Transverse colon (tissue), 4 donors: ENCODE measurements at regions of chr6 and their contacts with region 1.

Region 1: DNA sequence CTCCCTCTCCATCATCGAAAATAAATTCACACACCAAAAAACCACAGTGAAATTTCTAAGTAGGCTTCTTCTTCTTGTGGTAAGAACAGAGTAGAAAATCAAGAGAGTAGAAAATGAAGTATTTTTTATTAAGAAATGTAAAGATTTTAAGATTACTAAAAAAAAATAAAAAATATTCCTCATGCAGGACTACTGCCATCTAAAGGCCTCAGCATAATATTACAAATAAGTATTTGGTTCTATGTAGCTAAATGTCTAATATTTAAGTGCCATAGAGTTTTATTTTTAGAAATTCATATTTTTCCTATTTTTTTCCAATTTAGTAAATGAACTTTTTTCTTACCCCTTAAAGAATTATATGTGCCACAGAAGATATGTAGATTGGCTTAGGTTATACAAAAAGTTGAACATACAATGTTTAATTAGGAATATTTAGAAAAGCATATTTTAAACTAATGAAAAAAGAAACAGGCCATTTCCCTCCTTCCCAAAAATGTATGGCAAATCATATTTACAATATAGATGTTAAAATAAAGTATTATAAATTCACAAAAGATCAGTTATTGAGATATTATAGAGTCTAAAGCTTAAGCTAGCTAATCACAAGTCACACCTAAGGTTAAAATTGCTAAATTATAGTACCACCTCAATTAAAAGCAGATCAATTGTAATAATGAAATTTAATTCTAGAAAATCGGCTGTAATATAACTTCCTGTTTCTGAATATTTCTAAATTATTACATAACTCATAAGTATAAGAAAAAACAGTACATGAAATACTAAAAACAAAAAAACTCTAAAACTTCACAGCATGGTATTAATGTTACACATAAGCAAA is 3.5 kb upstream of the NT5DC1 start:
- DNase-seq: no peak
- H3K4me3 ChIP-seq: no peak overlapping the region
- H3K27ac ChIP-seq: no peak overlapping the region
- H3K4me1 ChIP-seq: peaks cover 4 to 20% (median 8%) of the 10 kb centered on the region in 4 donors
- H3K27me3 ChIP-seq: no peaks in the 10 kb centered on the region
- CTCF ChIP-seq: peak; percentile 40 to 57 (median 55)
- EP300 ChIP-seq: no peak
- POLR2A ChIP-seq: no peak

Region 2: DNA sequence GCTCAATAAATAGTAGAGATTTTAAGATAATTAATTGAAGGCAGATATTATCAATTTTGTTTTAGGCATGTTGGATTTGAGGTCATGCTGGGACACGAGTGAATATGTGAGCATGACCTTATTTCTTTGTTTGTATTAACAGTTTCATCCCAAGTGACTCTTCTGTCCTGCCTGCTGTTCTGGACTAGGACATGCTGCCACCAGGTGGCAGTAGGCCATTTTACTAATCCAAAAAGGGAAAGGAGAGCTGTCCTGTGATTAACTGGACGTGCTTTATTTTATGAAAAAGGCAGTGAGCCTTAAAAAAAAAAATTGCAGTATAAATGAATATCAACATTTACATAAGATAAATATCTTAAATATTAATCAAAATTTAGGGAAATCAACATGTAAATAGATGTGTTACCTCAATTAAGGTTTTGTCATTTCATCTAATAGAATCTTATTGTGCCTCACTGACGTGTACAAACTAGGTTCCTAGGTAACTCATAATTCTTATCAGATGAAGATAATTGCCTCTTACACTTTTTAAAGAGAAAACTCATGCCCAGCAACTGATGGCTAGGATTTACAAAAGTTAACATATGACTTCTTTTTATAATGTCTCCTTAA is 86.3 kb before region 1 on chr6:
- in situ Hi-C with region 1: loop called in 3 of 4 experiments (anchors 5 to 10 kb)
- intact Hi-C with region 1: no loop called
- DNase-seq: peak; percentile 78
- H3K4me3 ChIP-seq: no peak overlapping the region
- H3K27ac ChIP-seq: peak overlapping the region; percentile 34 to 66 (median 56)
- H3K4me1 ChIP-seq: peaks cover 0 to 55% (median 32%) of the 10 kb centered on the region in 4 donors
- H3K27me3 ChIP-seq: no peaks in the 10 kb centered on the region
- CTCF ChIP-seq: peak; percentile 73 to 82 (median 82)
- EP300 ChIP-seq: no peak
- POLR2A ChIP-seq: no peak

Region 3: GRCh38 chr6:116165596-116165995 is 68.4 kb after region 1 on chr6:
- in situ Hi-C with region 1: no loop called
- intact Hi-C with region 1: no loop called
- DNase-seq: no peak
- H3K4me3 ChIP-seq: no peak overlapping the region
- H3K27ac ChIP-seq: no peak overlapping the region
- H3K4me1 ChIP-seq: no peaks in the 10 kb centered on the region
- H3K27me3 ChIP-seq: no peaks in the 10 kb centered on the region
- CTCF ChIP-seq: no peak
- EP300 ChIP-seq: no peak
- POLR2A ChIP-seq: no peak